SK-N-SH (cell line): ENCODE measurements at regions of chr15 and their contacts with region 1.

Region 1: GRCh38 chr15:79380755-79381497 is 51.2 kb upstream of the MINAR1 start:
- DNase-seq: peak; percentile 76
- H3K4me3 ChIP-seq: peak overlapping the region in 1 of 2 experiments; percentile 33; a peak in 1 of 4 replicates
- H3K27ac ChIP-seq: no peak overlapping the region
- H3K4me1 ChIP-seq: peaks cover 0 to 3% of the 10 kb centered on the region in 2 experiments; a peak in 1 of 4 replicates
- H3K27me3 ChIP-seq: no peaks in the 10 kb centered on the region
- CTCF ChIP-seq: peak; percentile 95
- EP300 ChIP-seq: no peak
- RAD21 ChIP-seq: peak; percentile 95

Region 2: GRCh38 chr15:79329171-79329611 is 51.7 kb before region 1 on chr15:
- CTCF ChIA-PET with region 1: interaction called, 49 read pairs
- POLR2A ChIA-PET with region 1: no interaction called
- DNase-seq: no peak
- H3K4me3 ChIP-seq: no peak overlapping the region
- H3K27ac ChIP-seq: no peak overlapping the region
- H3K4me1 ChIP-seq: no peaks in the 10 kb centered on the region
- H3K27me3 ChIP-seq: no peaks in the 10 kb centered on the region
- CTCF ChIP-seq: no peak
- EP300 ChIP-seq: no peak
- RAD21 ChIP-seq: no peak

Region 3: GRCh38 chr15:79357566-79357965 is 23.4 kb before region 1 on chr15:
- CTCF ChIA-PET with region 1: interaction called, 22 read pairs
- POLR2A ChIA-PET with region 1: no interaction called
- DNase-seq: no peak
- H3K4me3 ChIP-seq: no peak overlapping the region
- H3K27ac ChIP-seq: no peak overlapping the region
- H3K4me1 ChIP-seq: no peaks in the 10 kb centered on the region
- H3K27me3 ChIP-seq: no peaks in the 10 kb centered on the region
- CTCF ChIP-seq: no peak
- EP300 ChIP-seq: no peak
- RAD21 ChIP-seq: no peak

Region 4: GRCh38 chr15:79403501-79403900 is 22.6 kb after region 1 on chr15:
- CTCF ChIA-PET with region 1: interaction called, 46 read pairs
- POLR2A ChIA-PET with region 1: no interaction called
- DNase-seq: no peak
- H3K4me3 ChIP-seq: no peak overlapping the region
- H3K27ac ChIP-seq: no peak overlapping the region
- H3K4me1 ChIP-seq: peaks cover 0 to 6% of the 10 kb centered on the region in 2 experiments; a peak in 2 of 4 replicates
- H3K27me3 ChIP-seq: no peaks in the 10 kb centered on the region
- CTCF ChIP-seq: no peak
- EP300 ChIP-seq: no peak
- RAD21 ChIP-seq: no peak

Region 5: GRCh38 chr15:79494963-79495746 is 114.2 kb after region 1 on chr15:
- CTCF ChIA-PET with region 1: no interaction called
- POLR2A ChIA-PET with region 1: no interaction called
- DNase-seq: peak; percentile 20
- H3K4me3 ChIP-seq: no peak overlapping the region
- H3K27ac ChIP-seq: no peak overlapping the region
- H3K4me1 ChIP-seq: no peaks in the 10 kb centered on the region; a peak in 1 of 4 replicates
- H3K27me3 ChIP-seq: no peaks in the 10 kb centered on the region
- CTCF ChIP-seq: no peak
- EP300 ChIP-seq: no peak
- RAD21 ChIP-seq: no peak

Region 6: DNA sequence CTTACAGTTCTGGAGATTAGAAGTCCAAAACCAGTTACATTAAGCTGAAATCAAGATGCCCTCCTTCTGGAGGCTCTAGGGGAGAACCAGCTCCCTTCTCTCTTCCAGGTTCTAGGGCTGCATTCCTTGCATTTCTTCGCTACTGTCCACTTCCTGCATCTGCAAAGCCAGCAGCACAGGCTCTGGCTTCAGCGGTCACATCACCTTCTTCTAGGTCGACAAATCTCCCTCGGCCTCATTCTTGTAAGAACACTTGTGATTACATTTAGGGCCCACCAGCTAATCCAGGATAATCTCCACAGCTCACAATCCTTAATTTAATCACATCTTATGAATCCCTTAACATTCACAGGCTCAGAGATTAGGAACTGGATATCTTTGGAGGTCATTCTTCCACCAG is 125.0 kb after region 1 on chr15:
- CTCF ChIA-PET with region 1: no interaction called
- POLR2A ChIA-PET with region 1: no interaction called
- DNase-seq: no peak
- H3K4me3 ChIP-seq: no peak overlapping the region
- H3K27ac ChIP-seq: no peak overlapping the region
- H3K4me1 ChIP-seq: no peaks in the 10 kb centered on the region
- H3K27me3 ChIP-seq: no peaks in the 10 kb centered on the region; the same call in 1 of the 2 replicates
- CTCF ChIP-seq: no peak
- EP300 ChIP-seq: no peak
- RAD21 ChIP-seq: no peak

Region 7: DNA sequence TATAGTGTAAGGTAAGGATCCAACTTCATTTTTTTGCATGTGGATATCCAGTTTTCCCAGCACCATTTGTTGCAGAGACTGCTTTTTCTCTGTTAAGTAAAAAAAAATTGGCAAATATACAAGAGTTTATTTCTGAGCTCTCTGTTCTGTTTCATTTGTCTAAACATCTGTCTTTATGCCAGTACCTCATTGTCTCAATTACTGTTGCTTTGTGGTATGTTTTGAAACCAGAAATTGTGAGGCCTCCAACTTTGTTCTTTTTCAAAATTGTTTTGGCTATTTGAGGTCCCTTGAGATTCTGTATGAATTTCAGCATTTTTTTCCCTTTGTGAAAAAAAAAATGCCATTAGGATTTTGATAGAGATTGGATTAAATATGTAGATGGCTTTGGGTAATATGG is 201.7 kb after region 1 on chr15:
- CTCF ChIA-PET with region 1: interaction called, 10 read pairs
- POLR2A ChIA-PET with region 1: no interaction called
- DNase-seq: no peak
- H3K4me3 ChIP-seq: no peak overlapping the region
- H3K27ac ChIP-seq: no peak overlapping the region
- H3K4me1 ChIP-seq: no peaks in the 10 kb centered on the region
- H3K27me3 ChIP-seq: no peaks in the 10 kb centered on the region
- CTCF ChIP-seq: no peak
- EP300 ChIP-seq: no peak
- RAD21 ChIP-seq: no peak

Region 8: DNA sequence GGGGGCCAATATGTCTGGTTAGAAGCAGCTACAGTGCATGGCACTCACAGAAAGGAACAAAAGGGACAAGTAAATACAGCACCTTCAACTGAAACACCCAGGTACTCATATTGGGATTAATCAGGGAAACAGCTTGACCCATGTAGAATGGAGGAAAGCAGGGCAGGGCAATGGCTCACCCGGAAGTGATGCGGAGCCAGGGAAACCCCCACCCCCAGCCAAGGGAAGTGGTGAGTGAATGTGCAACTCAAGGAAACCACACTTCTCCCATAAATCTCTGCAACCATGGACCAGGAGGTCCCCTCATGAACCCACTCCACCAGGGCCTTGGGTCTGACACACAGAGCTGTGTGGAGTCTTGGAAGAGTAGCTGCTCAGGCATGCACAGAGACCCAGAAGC is 398.8 kb after region 1 on chr15:
- CTCF ChIA-PET with region 1: no interaction called
- POLR2A ChIA-PET with region 1: no interaction called
- DNase-seq: no peak
- H3K4me3 ChIP-seq: no peak overlapping the region
- H3K27ac ChIP-seq: no peak overlapping the region
- H3K4me1 ChIP-seq: peaks cover 0 to 2% of the 10 kb centered on the region in 2 experiments; a peak in 1 of 4 replicates
- H3K27me3 ChIP-seq: no peaks in the 10 kb centered on the region
- CTCF ChIP-seq: no peak
- EP300 ChIP-seq: no peak
- RAD21 ChIP-seq: no peak

Region 9: DNA sequence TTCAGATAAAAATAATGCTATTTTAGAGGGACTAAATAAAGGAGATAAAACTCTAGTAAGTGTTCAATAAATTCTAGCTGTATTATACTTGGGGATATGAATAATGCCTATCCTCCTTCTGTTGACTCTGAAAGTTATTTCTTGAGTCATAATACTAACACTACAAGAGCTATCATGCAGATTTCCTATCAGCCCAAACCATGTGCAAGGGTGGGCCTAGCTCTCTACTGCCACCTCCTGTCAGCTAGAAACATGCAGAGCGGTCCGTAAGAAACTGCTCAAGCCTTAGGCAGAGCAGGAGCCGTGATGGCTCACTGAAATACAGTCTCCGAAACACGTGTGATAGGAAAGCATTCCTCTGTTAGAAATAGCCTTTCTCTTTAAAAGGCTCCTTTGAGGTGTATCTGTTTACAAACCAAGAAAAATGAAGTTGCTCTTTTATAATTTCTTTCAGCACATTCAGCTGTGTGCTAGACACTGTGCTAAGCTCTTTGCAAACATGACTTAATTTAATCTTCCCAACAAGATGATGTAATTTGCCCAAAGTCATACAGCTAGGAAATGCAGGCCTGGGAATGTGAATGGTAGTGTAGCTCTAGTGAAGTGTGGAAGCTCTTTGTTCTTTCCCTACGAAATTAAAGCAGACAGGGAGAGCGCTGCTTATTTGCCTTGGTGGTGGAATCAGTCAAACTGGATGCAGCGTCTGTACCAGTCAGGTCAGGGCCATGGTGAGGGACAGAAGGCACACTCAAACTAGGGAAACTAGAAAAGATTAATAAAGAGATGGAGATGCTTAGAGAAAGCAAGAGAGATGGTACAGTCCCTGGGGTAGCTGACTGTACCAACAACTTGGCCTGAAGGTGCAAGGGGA is 472.8 kb after region 1 on chr15:
- CTCF ChIA-PET with region 1: interaction called, 198 read pairs
- POLR2A ChIA-PET with region 1: interaction called, 6 read pairs
- DNase-seq: peak; percentile 60
- H3K4me3 ChIP-seq: peak overlapping the region in 1 of 2 experiments; percentile 27; a peak in 1 of 4 replicates
- H3K27ac ChIP-seq: peak overlapping the region in 1 of 2 experiments; percentile 79; a peak in 2 of 4 replicates
- H3K4me1 ChIP-seq: peaks cover 0 to 6% of the 10 kb centered on the region in 2 experiments; a peak in 2 of 4 replicates
- H3K27me3 ChIP-seq: no peaks in the 10 kb centered on the region
- CTCF ChIP-seq: peak; percentile 98
- EP300 ChIP-seq: no peak
- RAD21 ChIP-seq: peak; percentile 94

Region 10: DNA sequence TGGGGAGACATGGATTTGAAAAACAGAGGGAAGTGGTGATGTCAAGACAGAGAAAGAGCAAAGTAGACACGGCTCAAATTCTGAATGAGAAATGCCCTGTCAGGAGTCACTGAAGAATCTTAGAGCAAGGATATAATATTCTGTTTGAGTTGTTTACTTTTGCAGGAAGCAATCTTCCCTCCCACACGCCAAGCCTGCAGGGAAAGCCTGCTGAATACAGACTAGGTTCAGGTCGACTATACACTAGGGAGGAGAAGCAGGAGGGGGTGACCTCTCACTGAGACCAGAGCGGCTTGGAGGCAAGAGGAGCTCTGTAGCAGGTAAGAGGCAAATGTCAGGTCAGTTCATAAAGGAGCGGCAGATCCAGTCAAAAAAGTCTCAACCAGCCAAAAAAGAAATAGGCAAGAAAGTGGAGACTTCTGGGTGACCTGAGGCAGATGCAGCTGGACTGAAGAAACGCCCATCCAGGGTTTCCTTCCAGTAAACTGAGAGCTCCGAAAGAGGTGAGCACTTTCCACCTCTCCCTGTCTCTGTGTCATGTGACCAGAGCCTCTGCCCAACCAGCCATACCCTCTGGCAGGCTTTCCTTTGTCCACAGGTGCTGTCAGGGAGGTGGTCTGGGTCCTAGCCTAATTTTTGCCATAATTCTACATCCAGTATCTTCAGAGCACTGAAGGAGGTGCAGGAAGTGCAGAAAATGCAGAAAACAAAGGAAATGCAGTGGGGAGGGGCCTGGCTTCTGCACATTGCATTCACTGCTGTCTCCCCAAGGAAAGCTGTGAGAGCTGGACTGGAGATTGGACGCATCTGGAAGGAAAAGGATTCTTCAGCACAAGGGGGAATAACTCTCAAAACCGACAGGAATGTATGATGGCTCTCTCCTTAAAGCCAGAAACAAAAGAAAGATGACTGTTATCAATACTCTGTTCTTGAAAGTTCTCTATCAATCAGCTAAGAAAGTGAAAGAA is 908.9 kb after region 1 on chr15:
- CTCF ChIA-PET with region 1: no interaction called
- POLR2A ChIA-PET with region 1: no interaction called
- DNase-seq: no peak
- H3K4me3 ChIP-seq: no peak overlapping the region
- H3K27ac ChIP-seq: no peak overlapping the region
- H3K4me1 ChIP-seq: no peaks in the 10 kb centered on the region
- H3K27me3 ChIP-seq: peaks cover 12% of the 10 kb centered on the region; the same call in 1 of the 2 replicates
- CTCF ChIP-seq: no peak
- EP300 ChIP-seq: no peak
- RAD21 ChIP-seq: no peak